Activated T-helper 2 cell treated with anti-CD3 and anti-CD28 coated beads, Interferon-gamma antibody, Interleukin-2, Interleukin-4, amounts not matched to agents 10 μg/mL and 5 μg/mL and 100 μg/mL, durations not matched to agents 14 hours and 24 hours and 36 hours (primary cell): ENCODE measurements at regions of chr6 and their contacts with region 1.

Region 1: GRCh38 chr6:16420715-16421461 is 182.5 kb downstream of the GMPR start:
- DNase-seq: peak; percentile 48
- H3K4me3 Mint-ChIP-seq: peak overlapping the region; percentile 72
- H3K27ac Mint-ChIP-seq: peak overlapping the region; percentile 98
- H3K4me1 Mint-ChIP-seq: peaks cover 54% of the 10 kb centered on the region
- H3K27me3 Mint-ChIP-seq: no peaks in the 10 kb centered on the region

Region 2: GRCh38 chr6:16398587-16398986 is 22.3 kb before region 1 on chr6:
- intact Hi-C with region 1: loop called (anchors 1 kb)
- DNase-seq: no peak
- H3K4me3 Mint-ChIP-seq: no peak overlapping the region
- H3K27ac Mint-ChIP-seq: no peak overlapping the region
- H3K4me1 Mint-ChIP-seq: peaks cover 37% of the 10 kb centered on the region
- H3K27me3 Mint-ChIP-seq: no peaks in the 10 kb centered on the region

Region 3: GRCh38 chr6:16438718-16439591 is 18.1 kb after region 1 on chr6:
- intact Hi-C with region 1: loop called (anchors 1 kb)
- DNase-seq: no peak
- H3K4me3 Mint-ChIP-seq: no peak overlapping the region
- H3K27ac Mint-ChIP-seq: peak overlapping the region; percentile 32
- H3K4me1 Mint-ChIP-seq: peaks cover 60% of the 10 kb centered on the region
- H3K27me3 Mint-ChIP-seq: no peaks in the 10 kb centered on the region

Region 4: DNA sequence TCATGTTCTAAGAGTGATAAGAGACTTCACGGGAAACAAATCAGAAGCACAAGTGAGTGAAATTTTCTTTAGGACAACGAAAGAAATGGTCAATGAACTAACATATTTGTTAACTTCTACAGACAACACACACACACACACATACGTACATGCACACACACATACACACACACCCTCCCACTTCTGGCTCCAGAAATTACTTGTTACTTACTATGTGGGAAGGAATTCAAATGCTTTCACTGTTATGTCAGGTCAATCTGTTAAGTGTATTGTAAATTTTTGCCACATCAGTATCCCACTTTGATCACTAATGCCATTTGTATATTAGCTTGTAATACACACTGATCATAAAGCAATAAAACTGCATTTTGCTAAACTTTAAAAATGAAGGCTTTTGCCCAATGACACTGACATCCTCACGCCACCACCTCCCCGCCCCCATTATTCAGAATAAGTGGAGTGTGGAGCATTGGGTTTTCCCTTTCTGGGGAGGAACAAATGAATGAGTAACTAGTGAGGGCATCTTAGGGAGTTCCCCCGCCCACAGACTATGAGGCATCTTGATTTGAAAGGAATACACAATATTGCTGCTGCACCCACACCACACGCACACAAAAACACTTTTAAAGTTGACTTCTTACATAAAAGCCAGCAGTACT is 264.1 kb after region 1 on chr6:
- intact Hi-C with region 1: loop called (anchors 2 kb)
- DNase-seq: peak; percentile 49
- H3K4me3 Mint-ChIP-seq: no peak overlapping the region
- H3K27ac Mint-ChIP-seq: peak overlapping the region; percentile 86
- H3K4me1 Mint-ChIP-seq: peaks cover 83% of the 10 kb centered on the region
- H3K27me3 Mint-ChIP-seq: no peaks in the 10 kb centered on the region

Region 5: GRCh38 chr6:16956361-16956760 is 535.5 kb after region 1 on chr6:
- intact Hi-C with region 1: loop called (anchors 10 kb)
- DNase-seq: no peak
- H3K4me3 Mint-ChIP-seq: no peak overlapping the region
- H3K27ac Mint-ChIP-seq: peak overlapping the region; percentile 81
- H3K4me1 Mint-ChIP-seq: peaks cover 43% of the 10 kb centered on the region
- H3K27me3 Mint-ChIP-seq: peaks cover 37% of the 10 kb centered on the region